ENCODE measurements at regions of chr9 and their contacts with region 1.

Region 1: DNA sequence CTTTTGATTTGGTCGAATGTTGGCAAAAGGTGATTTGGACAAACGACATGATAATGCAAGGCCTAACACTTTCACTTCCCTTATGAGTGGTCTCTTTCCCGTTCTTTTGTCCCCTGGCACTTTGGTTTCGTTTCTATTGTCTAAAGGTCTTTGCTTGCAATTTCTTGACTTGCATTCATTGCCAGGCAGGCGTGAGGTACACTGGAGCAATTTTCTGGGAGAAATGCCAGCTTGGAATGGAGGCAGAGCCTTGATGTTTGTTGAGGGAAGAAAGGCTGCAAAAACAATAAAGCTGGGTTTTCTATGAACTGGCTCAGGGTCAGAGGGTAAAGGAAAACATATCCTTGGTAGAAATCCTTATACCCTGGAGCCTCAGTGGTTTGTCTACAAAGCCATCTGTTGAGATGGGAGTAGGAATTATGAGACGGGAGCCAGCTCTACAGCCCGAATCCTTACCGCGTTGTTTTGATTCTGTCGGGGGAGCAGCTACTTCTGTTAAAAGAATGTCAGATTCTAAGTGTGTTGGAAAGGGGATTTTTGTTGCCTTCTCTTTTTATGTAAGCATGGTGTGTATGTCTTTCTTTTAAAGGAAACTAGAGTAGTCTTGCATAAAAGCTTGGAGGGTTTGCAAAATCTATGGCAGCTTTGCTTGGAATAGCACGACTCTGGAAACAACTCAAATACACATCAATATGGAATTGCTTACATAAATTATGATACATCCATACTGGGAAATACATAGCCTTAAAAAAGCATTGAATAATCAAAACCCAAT is 158.9 kb downstream of the RMI1 start:
- DNase-seq: no peak
- ATAC-seq: no peak
- H3K4me3 Mint-ChIP-seq: peak overlapping the region; percentile 46
- H3K27ac Mint-ChIP-seq: no peak overlapping the region
- H3K4me1 Mint-ChIP-seq: peaks cover 8% of the 10 kb centered on the region
- H3K27me3 Mint-ChIP-seq: peaks cover 43% of the 10 kb centered on the region
- CTCF ChIP-seq: no peak

Region 2: GRCh38 chr9:84101964-84102632 is 37.4 kb before region 1 on chr9:
- CTCF ChIA-PET with region 1: no interaction called
- POLR2A ChIA-PET with region 1: no interaction called
- intact Hi-C with region 1: loop called (anchors 2 kb)
- DNase-seq: no peak
- ATAC-seq: no peak
- H3K4me3 Mint-ChIP-seq: no peak overlapping the region
- H3K27ac Mint-ChIP-seq: no peak overlapping the region
- H3K4me1 Mint-ChIP-seq: no peaks in the 10 kb centered on the region
- H3K27me3 Mint-ChIP-seq: peaks cover 28% of the 10 kb centered on the region
- CTCF ChIP-seq: no peak

Measured in activated CD8-positive, alpha-beta T cell treated with anti-CD3 and anti-CD28 coated beads for 36 hours (primary cell).